ENCODE measurements at regions of chr10 and their contacts with region 1.

Region 1: GRCh38 chr10:110354322-110354766 is 49.6 kb upstream of the SMNDC1 start:
- DNase-seq: peak; percentile 58 to 92
- H3K4me3 ChIP-seq: peak overlapping the region in 1 of 4 experiments; percentile 33; a peak in 1 of 8 replicates
- H3K27ac ChIP-seq: no peak overlapping the region
- H3K4me1 ChIP-seq: peaks cover 5 to 14% (median 10%) of the 10 kb centered on the region in 4 experiments; a peak in 6 of 7 replicates
- H3K27me3 ChIP-seq: no peaks in the 10 kb centered on the region; a peak in 1 of 7 replicates
- CTCF ChIP-seq: peak; percentile 83 to 91 (median 87)
- EP300 ChIP-seq: no peak
- POLR2A ChIP-seq: no peak
- RAD21 ChIP-seq: peak; percentile 78 to 82

Region 2: DNA sequence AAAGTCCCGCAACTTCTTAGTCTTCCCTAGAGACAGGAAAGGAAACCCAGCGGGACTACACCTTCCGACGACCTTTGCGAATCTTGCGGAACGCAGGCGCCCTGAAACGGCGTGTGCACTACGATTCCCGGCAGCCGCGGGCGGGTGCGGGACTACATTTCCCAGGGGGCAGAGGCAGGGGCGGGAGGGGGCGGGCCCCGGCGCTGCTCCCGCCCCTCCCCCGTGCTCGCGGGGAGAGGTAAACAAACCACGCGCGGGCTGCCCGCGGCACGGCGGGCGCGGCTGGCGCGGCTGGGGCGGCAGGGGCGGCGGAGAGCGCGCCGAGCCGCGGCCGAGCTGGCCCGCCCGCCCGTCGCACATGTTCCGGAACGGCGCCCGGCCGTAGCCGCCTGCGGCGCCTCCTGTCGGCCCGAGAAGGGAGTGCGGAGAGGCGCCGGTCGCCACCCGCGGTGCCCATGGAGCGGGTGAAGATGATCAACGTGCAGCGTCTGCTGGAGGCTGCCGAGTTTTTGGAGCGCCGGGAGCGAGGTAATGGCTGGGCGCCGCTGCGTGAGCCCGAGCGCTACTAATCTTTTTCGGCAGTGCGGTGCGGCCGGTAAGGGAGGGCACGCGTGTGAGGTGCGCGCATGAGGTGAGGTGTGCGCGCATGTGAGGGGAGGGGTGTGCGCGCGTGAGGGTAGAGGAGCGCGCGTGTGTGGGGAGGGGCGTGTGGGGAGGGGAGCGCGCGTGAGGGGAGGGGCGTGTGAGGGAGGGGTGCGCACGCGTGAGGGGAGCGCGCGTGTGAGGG is 128.4 kb before region 1 on chr10:
- CTCF ChIA-PET with region 1: no interaction called
- POLR2A ChIA-PET with region 1: no interaction called
- DNase-seq: peak; percentile 79 to 95
- H3K4me3 ChIP-seq: peak overlapping the region; percentile 61 to 86 (median 66)
- H3K27ac ChIP-seq: no peak overlapping the region; the same call in 1 of the 2 replicates
- H3K4me1 ChIP-seq: peaks cover 0 to 13% (median 6%) of the 10 kb centered on the region in 4 experiments; a peak in 6 of 7 replicates
- H3K27me3 ChIP-seq: peaks cover 0 to 2% (median 0%) of the 10 kb centered on the region in 4 experiments; a peak in 1 of 7 replicates
- CTCF ChIP-seq: peak; percentile 67 to 79 (median 70)
- EP300 ChIP-seq: no peak
- POLR2A ChIP-seq: no peak
- RAD21 ChIP-seq: peak; percentile 36 to 56

Region 3: GRCh38 chr10:110260746-110261477 is 93.4 kb before region 1 on chr10:
- CTCF ChIA-PET with region 1: no interaction called
- POLR2A ChIA-PET with region 1: no interaction called
- DNase-seq: no peak
- H3K4me3 ChIP-seq: no peak overlapping the region
- H3K27ac ChIP-seq: no peak overlapping the region
- H3K4me1 ChIP-seq: no peaks in the 10 kb centered on the region
- H3K27me3 ChIP-seq: no peaks in the 10 kb centered on the region
- CTCF ChIP-seq: no peak
- EP300 ChIP-seq: no peak
- POLR2A ChIP-seq: no peak
- RAD21 ChIP-seq: no peak

Region 4: GRCh38 chr10:110326351-110327032 is 27.9 kb before region 1 on chr10:
- CTCF ChIA-PET with region 1: interaction called, 33 read pairs
- POLR2A ChIA-PET with region 1: no interaction called
- DNase-seq: no peak
- H3K4me3 ChIP-seq: no peak overlapping the region
- H3K27ac ChIP-seq: no peak overlapping the region
- H3K4me1 ChIP-seq: no peaks in the 10 kb centered on the region
- H3K27me3 ChIP-seq: no peaks in the 10 kb centered on the region
- CTCF ChIP-seq: no peak
- EP300 ChIP-seq: no peak
- POLR2A ChIP-seq: no peak
- RAD21 ChIP-seq: no peak

Region 5: GRCh38 chr10:110376021-110376766 is 21.9 kb after region 1 on chr10:
- CTCF ChIA-PET with region 1: interaction called, 19 read pairs
- POLR2A ChIA-PET with region 1: no interaction called
- DNase-seq: no peak
- H3K4me3 ChIP-seq: no peak overlapping the region
- H3K27ac ChIP-seq: no peak overlapping the region
- H3K4me1 ChIP-seq: peaks cover 0 to 3% (median 2%) of the 10 kb centered on the region in 4 experiments; a peak in 3 of 7 replicates
- H3K27me3 ChIP-seq: no peaks in the 10 kb centered on the region
- CTCF ChIP-seq: peak; percentile 15 to 52 (median 20); a peak in 3 of 4 replicates
- EP300 ChIP-seq: no peak
- POLR2A ChIP-seq: no peak
- RAD21 ChIP-seq: peak in 1 of 2 experiments; percentile 31; a peak in 1 of 4 replicates

Region 6: DNA sequence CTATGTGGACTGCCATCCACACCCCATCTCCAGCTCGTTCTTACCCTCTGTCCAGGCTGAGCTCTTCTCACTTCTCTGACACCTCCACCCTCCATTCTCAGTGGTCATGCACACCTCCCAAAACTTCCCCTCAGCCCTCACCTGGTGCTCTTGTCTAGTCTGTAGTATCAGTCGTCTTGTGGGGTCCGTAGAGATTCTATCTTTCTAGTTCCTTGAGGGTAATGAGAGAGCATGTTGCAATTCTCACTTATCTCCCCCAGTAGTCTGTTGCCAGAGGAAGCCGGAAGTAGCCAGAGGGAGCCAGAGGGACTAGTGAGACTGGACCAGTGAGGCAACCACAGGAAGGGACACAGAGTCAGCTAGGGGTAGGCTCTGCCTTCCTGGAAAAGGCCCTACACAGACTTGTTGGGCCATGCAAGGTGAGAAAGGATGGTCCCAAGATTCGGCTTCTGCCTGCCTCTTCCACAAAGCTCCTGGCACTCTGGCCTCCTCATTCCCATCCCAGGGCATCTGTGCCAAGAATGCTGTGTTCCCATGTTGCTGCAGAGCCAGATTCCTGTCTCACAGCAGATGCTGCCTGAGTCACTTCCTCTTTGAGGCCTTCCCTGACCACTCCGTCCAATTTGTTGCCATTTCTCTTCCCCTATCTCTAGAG is 92.7 kb after region 1 on chr10:
- CTCF ChIA-PET with region 1: interaction called, 32 read pairs
- POLR2A ChIA-PET with region 1: no interaction called
- DNase-seq: no peak
- H3K4me3 ChIP-seq: no peak overlapping the region
- H3K27ac ChIP-seq: no peak overlapping the region
- H3K4me1 ChIP-seq: no peaks in the 10 kb centered on the region
- H3K27me3 ChIP-seq: no peaks in the 10 kb centered on the region
- CTCF ChIP-seq: peak in 1 of 3 experiments; percentile 19; a peak in 1 of 4 replicates
- EP300 ChIP-seq: no peak
- POLR2A ChIP-seq: no peak
- RAD21 ChIP-seq: peak; percentile 6 to 36; a peak in 2 of 4 replicates

Region 7: DNA sequence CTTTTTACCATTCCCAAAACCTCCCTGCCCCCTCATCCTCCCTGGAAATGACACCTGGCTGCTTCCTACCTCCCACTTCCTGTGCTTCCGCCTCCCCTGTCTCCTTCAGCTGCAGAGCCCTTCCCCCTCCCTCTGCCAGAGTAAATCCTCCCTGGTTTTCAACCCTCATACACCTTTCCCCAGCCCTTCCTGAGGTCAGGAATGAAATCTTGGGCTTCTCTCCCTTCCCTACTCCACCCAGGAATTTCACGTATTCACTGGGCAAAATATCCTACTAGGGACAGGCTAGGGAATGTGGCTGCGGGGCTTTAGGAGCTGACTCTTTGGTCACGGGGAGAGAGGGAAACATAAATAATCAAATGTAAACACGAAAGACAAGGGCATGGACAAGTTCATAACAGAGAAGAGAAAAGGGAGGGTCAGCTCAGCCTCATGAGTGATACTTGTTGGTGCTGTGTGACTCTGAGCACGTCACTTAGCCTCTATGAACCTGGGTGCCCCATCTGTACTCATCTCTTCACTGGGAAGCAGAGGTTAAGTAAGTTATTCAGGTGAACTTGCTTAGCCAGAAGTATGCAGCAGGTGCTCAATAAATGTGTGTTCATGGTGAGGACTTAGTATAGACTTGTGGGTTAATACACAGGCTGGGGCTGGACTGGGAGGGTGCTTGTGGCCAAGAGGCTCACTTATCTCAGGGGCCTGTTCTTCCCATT is 133.2 kb after region 1 on chr10:
- CTCF ChIA-PET with region 1: interaction called, 13 read pairs
- POLR2A ChIA-PET with region 1: no interaction called
- DNase-seq: no peak
- H3K4me3 ChIP-seq: peak overlapping the region in 1 of 4 experiments; percentile 18; a peak in 2 of 8 replicates
- H3K27ac ChIP-seq: no peak overlapping the region
- H3K4me1 ChIP-seq: peaks cover 9 to 15% (median 11%) of the 10 kb centered on the region in 4 experiments
- H3K27me3 ChIP-seq: no peaks in the 10 kb centered on the region
- CTCF ChIP-seq: no peak
- EP300 ChIP-seq: no peak; a peak in 1 of 3 replicates
- POLR2A ChIP-seq: no peak
- RAD21 ChIP-seq: no peak

Region 8: DNA sequence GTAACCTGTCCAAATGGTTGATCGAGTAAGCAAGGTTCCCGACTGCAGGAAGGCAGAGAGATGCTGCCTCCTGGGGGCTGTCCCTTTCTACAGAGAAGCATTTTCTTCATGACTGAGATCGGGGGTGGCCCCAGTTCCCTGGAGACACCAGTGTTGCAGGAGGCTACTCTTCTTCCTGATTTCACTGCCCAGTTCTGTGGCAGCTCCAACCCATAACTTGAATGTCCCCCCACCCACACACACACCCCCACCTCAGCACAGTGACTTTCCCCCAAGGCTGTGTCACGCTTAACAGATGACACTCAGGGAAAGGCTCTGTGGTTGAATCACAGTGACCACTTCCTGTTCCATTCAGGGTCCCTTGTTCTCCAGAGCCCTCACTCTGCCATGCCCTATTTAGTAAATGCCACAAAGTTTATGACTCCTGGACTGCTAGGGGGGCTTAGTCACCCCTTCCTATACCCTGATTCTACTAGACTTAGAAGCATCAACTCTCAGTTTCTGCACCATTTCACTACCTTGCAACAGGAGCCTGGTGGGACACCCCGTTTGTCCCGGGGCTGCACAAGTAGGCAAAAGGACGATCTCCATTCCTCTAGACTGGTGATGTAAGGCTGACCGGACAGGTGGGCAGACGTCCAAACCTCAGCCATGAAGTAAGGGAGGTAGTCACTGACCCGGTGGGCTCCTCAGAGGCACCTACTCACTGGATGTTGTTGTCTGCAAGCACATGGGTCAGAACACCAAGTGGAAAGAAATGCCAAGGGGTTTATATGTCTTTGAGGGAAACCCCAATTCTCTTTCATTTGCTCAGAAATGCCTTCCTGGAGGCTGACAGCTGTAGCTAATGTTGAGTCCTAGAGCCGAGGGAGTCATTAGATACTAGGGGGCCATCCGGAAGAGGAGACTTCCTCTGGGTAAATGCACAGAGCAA is 181.9 kb after region 1 on chr10:
- CTCF ChIA-PET with region 1: interaction called, 16 read pairs
- POLR2A ChIA-PET with region 1: interaction called, 3 read pairs
- DNase-seq: no peak
- H3K4me3 ChIP-seq: no peak overlapping the region
- H3K27ac ChIP-seq: no peak overlapping the region
- H3K4me1 ChIP-seq: peaks cover 0 to 3% (median 0%) of the 10 kb centered on the region in 4 experiments; a peak in 2 of 7 replicates
- H3K27me3 ChIP-seq: no peaks in the 10 kb centered on the region
- CTCF ChIP-seq: peak; percentile 36 to 55 (median 47)
- EP300 ChIP-seq: no peak
- POLR2A ChIP-seq: no peak
- RAD21 ChIP-seq: peak; percentile 80

Measured in H1 (cell line).